Natural killer cell (primary cell): ENCODE measurements at regions of chr3 and their contacts with region 1.

Region 1: DNA sequence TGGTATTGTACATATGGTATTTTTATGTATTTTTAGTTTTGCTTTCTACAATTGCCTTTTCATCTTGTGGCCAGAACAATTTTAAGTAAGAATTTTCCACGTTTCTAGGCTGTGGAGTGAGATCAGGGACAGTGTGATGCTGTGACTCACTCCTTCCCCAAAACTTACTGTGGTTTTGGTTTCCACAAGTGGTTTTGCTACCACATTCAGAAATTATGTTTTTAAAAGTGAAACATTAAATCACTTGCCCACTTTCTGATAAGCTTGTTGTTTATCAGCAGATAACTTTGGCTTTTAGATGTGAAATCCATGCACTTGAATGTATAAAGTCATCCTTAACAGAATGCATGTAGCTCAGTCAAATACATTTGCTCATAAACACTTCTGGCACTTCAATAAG is 192.2 kb upstream of the THRB start:
- DNase-seq: peak in 1 of 2 donors; percentile 12
- ATAC-seq: peak; percentile 44 to 90 (median 84)
- H3K4me3 ChIP-seq: no peak overlapping the region
- H3K4me3 Mint-ChIP-seq: peak overlapping the region; percentile 77
- H3K27ac ChIP-seq: no peak overlapping the region
- H3K27ac Mint-ChIP-seq: peak overlapping the region; percentile 36 to 72
- H3K4me1 ChIP-seq: peaks cover 11% of the 10 kb centered on the region
- H3K4me1 Mint-ChIP-seq: peaks cover 30 to 33% of the 10 kb centered on the region in 2 donors
- H3K27me3 ChIP-seq: peaks cover 3% of the 10 kb centered on the region
- H3K27me3 Mint-ChIP-seq: peaks cover 20 to 60% of the 10 kb centered on the region in 2 donors
- CTCF ChIP-seq: no peak

Region 2: GRCh38 chr3:25460751-25461150 is 773.9 kb after region 1 on chr3:
- intact Hi-C with region 1: loop called (anchors 2 kb)
- DNase-seq: peak; percentile 38 to 41
- ATAC-seq: peak; percentile 89 to 96 (median 95)
- H3K4me3 ChIP-seq: no peak overlapping the region
- H3K4me3 Mint-ChIP-seq: peak overlapping the region; percentile 36
- H3K27ac ChIP-seq: peak overlapping the region; percentile 73
- H3K27ac Mint-ChIP-seq: peak overlapping the region; percentile 84 to 90
- H3K4me1 ChIP-seq: peaks cover 30% of the 10 kb centered on the region
- H3K4me1 Mint-ChIP-seq: peaks cover 32 to 37% of the 10 kb centered on the region in 2 donors
- H3K27me3 ChIP-seq: no peaks in the 10 kb centered on the region
- H3K27me3 Mint-ChIP-seq: no peaks in the 10 kb centered on the region
- CTCF ChIP-seq: no peak